Activated CD4-positive, alpha-beta memory T cell treated with anti-CD3 and anti-CD28 coated beads for 36 hours (primary cell): ENCODE measurements at regions of chr7 and their contacts with region 1.

Region 1: DNA sequence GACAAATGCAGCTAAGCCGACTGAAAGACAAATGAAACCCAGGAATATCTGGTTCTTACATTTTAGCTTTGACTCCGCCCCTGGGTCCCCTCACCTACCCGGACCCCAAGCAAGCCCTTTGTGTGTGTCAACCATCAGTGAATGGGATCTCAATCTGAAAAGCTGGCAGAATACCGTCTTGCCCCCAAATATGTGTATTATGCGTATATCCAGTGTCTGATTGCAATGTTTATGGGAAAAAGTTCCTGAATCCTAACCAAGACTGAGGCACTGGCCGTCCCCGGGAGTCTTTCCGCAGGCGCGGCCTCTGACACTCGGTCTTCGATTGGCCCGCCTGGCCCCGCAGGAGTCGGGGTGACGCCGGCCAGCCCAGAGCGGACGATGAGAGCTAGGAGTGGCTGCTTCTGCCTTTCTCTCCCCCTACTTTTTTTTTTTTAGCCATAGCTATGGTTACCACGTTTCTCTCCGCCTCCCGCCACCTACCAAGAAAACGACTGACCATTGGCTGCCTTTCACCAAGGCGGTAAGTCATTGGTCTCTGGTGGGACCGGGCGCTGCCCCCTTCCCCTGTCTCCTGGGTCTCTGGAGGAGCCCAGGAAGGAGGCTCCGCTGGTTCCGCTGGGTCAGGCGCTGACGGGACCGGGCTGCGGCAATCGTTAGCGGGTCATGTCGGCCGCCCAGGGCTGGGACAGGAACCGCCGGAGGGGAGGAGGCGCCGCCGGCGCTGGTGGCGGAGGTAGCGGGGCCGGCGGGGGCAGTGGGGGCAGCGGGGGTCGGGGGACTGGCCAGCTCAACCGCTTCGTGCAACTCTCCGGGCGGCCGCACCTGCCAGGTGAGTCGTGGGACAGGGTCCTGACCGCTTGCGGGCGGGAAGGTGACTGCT is at the start of gene KLHDC10:
- DNase-seq: peak; percentile 97
- H3K4me3 Mint-ChIP-seq: peak within 1 kb of the TSS; percentile 75
- H3K27ac Mint-ChIP-seq: peak within 1 kb of the TSS; percentile 66
- H3K4me1 Mint-ChIP-seq: peaks cover 31% of the 10 kb centered on the region
- H3K27me3 Mint-ChIP-seq: no peaks in the 10 kb centered on the region
- total RNA-seq, gene KLHDC10: 16.4 to 16.8 TPM

Region 2: DNA sequence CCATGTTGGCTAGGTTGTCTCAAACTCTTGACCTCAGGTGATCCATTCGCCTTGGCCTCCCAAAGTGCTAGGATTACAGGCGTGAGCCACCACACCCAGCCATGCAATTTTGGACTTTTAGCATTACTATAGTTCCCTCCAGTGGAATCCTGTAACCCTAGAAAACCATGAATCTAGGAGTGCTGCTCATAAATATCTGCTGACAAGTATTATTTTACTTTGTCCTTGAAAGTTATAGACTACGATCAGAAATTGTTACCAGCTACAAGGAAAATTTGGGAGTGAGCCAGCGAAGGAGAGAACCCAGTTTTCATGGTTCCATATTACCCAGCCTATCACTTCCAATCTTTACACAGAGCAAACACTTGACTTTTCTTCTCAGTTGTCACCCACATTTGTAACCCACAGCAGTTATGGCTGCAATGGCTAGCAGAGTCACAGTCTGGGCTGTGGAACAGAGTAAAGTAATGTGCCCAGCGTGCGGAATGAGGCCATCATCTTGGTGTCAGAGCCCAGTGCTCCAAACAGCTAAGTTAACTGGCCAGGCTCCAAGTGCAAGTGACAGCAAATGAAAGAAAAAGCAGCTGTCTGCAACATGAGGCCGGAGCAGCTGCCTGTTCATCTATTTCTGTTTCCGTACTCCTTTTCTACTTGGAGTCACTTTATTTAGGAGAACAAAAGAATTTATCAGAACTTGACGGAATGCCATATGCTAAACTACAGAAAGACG is 48.9 kb before region 1 on chr7:
- CTCF ChIA-PET with region 1: no interaction called
- POLR2A ChIA-PET with region 1: no interaction called
- intact Hi-C with region 1: no loop called
- DNase-seq: no peak
- H3K4me3 Mint-ChIP-seq: no peak overlapping the region
- H3K27ac Mint-ChIP-seq: no peak overlapping the region
- H3K4me1 Mint-ChIP-seq: no peaks in the 10 kb centered on the region
- H3K27me3 Mint-ChIP-seq: no peaks in the 10 kb centered on the region

Region 3: GRCh38 chr7:130040576-130040975 is 29.6 kb before region 1 on chr7:
- CTCF ChIA-PET with region 1: no interaction called
- POLR2A ChIA-PET with region 1: no interaction called
- intact Hi-C with region 1: no loop called
- DNase-seq: no peak
- H3K4me3 Mint-ChIP-seq: no peak overlapping the region
- H3K27ac Mint-ChIP-seq: no peak overlapping the region
- H3K4me1 Mint-ChIP-seq: no peaks in the 10 kb centered on the region
- H3K27me3 Mint-ChIP-seq: no peaks in the 10 kb centered on the region

Region 4: DNA sequence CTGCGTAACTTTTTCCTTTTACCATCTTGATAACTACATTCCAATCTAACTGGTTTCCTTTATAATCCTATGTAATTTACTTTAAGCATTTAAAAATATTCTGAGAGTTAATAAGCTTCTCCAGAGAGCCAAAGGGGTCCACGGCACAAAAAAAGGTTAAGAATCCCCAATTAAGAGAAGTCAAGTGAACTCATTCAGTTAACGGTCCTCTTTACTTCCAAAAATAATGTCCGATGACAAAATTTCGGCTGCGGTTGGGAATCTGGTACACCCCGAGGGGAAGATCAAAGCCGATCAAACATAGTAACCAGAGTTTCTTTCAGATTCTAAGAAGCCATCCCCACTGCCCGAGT is 19.5 kb before region 1 on chr7:
- CTCF ChIA-PET with region 1: interaction called, 6 read pairs
- POLR2A ChIA-PET with region 1: no interaction called
- intact Hi-C with region 1: loop called (anchors 1 kb)
- DNase-seq: no peak
- H3K4me3 Mint-ChIP-seq: peak overlapping the region; percentile 99
- H3K27ac Mint-ChIP-seq: peak overlapping the region; percentile 89
- H3K4me1 Mint-ChIP-seq: peaks cover 13% of the 10 kb centered on the region
- H3K27me3 Mint-ChIP-seq: no peaks in the 10 kb centered on the region

Region 5: DNA sequence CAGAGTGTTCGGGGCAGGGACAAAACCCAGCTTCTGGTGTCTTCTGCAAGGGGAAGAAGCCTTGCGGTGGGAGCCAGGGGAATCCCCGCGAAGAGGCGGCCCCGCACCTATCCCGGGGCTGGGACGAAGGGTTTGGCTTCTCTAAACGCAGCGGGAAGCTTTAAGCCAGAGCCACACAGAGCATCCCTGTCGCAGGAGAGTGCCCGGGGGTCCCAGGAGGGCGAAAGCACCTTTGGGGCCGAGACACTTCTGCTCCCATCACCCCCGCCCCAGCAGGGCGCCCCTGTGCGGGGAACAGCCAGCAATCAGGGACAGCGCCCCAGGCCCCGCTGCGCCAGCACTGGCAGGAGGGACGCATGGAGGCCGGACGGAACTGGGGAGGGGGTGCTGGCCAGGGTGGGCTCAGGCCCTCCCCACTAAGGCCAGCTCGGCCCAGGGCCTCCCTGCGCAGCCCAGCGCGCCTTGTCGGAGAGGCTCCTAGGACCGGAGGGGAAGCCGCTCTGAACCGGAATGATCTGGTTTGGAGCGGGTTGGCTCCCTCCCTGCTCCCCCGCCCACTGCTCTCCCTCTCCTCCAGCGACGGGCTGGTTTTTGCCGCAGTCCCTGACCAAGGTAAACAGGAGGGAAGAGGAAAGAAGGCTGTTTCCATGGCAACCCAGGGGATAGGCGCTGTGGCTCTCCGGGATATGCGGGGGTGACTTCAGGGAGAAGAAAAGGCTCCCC is 71.1 kb after region 1 on chr7:
- CTCF ChIA-PET with region 1: interaction called, 4 read pairs
- POLR2A ChIA-PET with region 1: no interaction called
- intact Hi-C with region 1: loop called (anchors 1 kb)
- DNase-seq: peak; percentile 68
- H3K4me3 Mint-ChIP-seq: peak overlapping the region; percentile 45
- H3K27ac Mint-ChIP-seq: no peak overlapping the region
- H3K4me1 Mint-ChIP-seq: peaks cover 8% of the 10 kb centered on the region
- H3K27me3 Mint-ChIP-seq: no peaks in the 10 kb centered on the region

Region 6: DNA sequence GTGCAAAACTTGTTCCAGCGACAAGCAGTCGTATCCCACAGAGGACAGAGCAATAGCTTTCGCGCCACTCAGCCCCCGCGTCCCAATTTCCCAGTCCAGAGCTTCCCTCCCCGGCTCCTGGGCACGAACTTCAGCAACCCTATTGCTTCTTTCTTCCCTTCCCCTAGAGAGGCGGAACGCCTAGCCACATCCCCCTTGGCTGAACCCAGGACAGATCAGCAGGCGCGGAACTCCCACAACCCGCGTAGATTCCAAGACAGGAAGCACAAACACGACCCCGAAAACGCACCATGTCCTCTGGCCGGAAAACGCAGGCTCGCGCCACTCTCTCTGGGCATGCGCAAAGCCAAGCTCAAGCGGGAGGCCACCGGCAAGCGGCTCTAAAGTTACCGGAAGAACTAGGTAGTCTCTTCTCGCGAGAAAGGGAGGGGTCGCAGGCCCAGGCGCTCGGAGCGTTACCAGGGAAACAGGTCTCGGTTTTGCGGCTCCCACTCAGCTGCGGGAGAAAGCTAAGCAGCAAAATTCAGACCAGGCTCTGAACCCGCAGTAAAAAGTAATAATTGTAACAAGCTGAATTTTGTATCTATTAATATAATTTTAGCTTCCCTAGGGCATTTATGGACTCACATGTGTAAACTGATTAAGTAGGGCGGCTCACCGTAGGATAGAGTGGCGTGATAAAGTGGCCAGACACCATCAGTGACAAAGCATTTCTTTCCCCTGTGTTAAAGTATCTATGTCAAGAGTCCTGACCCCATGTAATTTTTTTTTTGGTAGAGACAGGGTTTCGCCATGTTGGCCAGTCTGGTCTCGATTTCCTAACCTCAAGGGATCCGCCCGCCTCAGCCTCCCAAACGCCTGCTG is 135.1 kb after region 1 on chr7 and contains the start of gene TMEM209:
- CTCF ChIA-PET with region 1: interaction called, 14 read pairs
- POLR2A ChIA-PET with region 1: interaction called, 7 read pairs
- intact Hi-C with region 1: loop called (anchors 5 kb)
- DNase-seq: peak; percentile 97
- H3K4me3 Mint-ChIP-seq: peak within 1 kb of the TSS; percentile 96
- H3K27ac Mint-ChIP-seq: peak within 1 kb of the TSS; percentile 98
- H3K4me1 Mint-ChIP-seq: peaks cover 21% of the 10 kb centered on the region
- H3K27me3 Mint-ChIP-seq: peaks cover 2% of the 10 kb centered on the region
- total RNA-seq, gene TMEM209: 35.5 to 35.9 TPM

Region 7: DNA sequence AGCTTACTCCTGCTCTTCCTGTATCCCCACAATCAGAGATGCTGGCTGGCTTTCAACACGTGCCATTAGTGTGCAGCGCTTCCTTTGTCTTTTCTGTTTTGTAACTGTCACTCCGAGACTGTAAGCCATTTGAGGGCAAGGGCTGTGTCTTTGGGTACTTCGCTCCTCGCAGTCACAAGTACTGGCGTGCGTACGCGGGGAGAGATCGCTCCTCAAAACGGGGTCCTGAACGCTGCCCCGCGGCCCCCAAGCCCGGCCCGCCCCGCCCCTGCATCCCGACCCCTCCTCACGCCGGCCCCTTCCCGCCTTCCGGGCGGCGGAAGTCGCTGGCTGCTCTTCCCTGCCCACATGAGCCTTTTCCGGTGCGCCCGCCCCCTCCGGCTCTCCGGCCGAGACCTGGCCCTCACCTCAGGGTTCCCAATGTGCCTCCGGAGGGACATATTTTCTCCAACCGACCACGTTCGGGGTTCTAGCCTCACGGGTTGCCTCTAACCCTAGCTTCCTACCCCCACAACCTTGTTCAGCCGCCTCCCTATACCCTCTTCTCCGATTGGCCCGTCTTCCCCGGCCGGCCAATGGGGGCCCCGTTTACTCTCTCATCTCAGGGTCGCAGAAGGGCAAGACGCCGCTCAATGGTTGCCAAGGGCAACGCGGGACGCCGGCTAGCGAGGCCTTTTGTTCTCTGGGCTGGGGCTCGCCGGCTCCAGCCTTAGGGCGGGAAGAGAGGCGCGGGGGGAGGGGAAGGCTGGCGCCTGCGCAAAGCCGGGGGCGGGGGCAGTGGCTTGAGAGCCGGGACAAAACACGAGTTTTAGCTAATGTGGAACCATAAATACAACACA is 370.5 kb after region 1 on chr7 and contains the start of gene CEP41:
- CTCF ChIA-PET with region 1: no interaction called
- POLR2A ChIA-PET with region 1: no interaction called
- intact Hi-C with region 1: loop called (anchors 2 kb)
- DNase-seq: peak; percentile 97
- H3K4me3 Mint-ChIP-seq: peak within 1 kb of the TSS; percentile 98
- H3K27ac Mint-ChIP-seq: peak within 1 kb of the TSS; percentile 99
- H3K4me1 Mint-ChIP-seq: peaks cover 21% of the 10 kb centered on the region
- H3K27me3 Mint-ChIP-seq: no peaks in the 10 kb centered on the region
- total RNA-seq, gene CEP41: 14.0 to 16.4 TPM

Region 8: GRCh38 chr7:130668257-130669084 is 598.3 kb after region 1 on chr7 and contains the start of gene COPG2:
- CTCF ChIA-PET with region 1: no interaction called
- POLR2A ChIA-PET with region 1: interaction called, 3 read pairs
- intact Hi-C with region 1: loop called (anchors 10 kb)
- DNase-seq: peak; percentile 84
- H3K4me3 Mint-ChIP-seq: peak within 1 kb of the TSS; percentile 84
- H3K27ac Mint-ChIP-seq: peak within 1 kb of the TSS; percentile 65
- H3K4me1 Mint-ChIP-seq: peaks cover 18% of the 10 kb centered on the region
- H3K27me3 Mint-ChIP-seq: peaks cover 4% of the 10 kb centered on the region
- total RNA-seq, gene COPG2: 31.5 to 33.4 TPM

Region 9: GRCh38 chr7:130831817-130832481 is 761.7 kb after region 1 on chr7:
- CTCF ChIA-PET with region 1: interaction called, 22 read pairs
- POLR2A ChIA-PET with region 1: no interaction called
- intact Hi-C with region 1: loop called (anchors 2 kb)
- DNase-seq: no peak
- H3K4me3 Mint-ChIP-seq: no peak overlapping the region
- H3K27ac Mint-ChIP-seq: no peak overlapping the region
- H3K4me1 Mint-ChIP-seq: no peaks in the 10 kb centered on the region
- H3K27me3 Mint-ChIP-seq: peaks cover 23% of the 10 kb centered on the region